ENCODE measurements at regions of chr6 and their contacts with region 1.

Region 1: GRCh38 chr6:26025894-26026832 is 61.1 kb upstream of the HFE start:
- DNase-seq: peak; percentile 97
- H3K4me3 ChIP-seq: peak overlapping the region; percentile 60 to 78 (median 69)
- H3K27ac ChIP-seq: peak overlapping the region; percentile 90 to 97 (median 94)
- H3K4me1 ChIP-seq: peaks cover 13 to 42% (median 31%) of the 10 kb centered on the region in 4 donors
- H3K27me3 ChIP-seq: no peaks in the 10 kb centered on the region
- CTCF ChIP-seq: peak; percentile 82 to 83 (median 82)
- EP300 ChIP-seq: peak; percentile 28
- POLR2A ChIP-seq: no peak

Region 2: GRCh38 chr6:26054857-26055669 is 28.9 kb after region 1 on chr6:
- intact Hi-C with region 1: loop called (anchors 2 kb)
- DNase-seq: peak; percentile 95
- H3K4me3 ChIP-seq: peak overlapping the region; percentile 75 to 83 (median 79)
- H3K27ac ChIP-seq: peak overlapping the region; percentile 94 to 99 (median 96)
- H3K4me1 ChIP-seq: peaks cover 0 to 17% (median 17%) of the 10 kb centered on the region in 4 donors
- H3K27me3 ChIP-seq: no peaks in the 10 kb centered on the region
- CTCF ChIP-seq: peak; percentile 23 to 53 (median 42)
- EP300 ChIP-seq: no peak
- POLR2A ChIP-seq: no peak

Region 3: GRCh38 chr6:26075063-26075717 is 49.0 kb after region 1 on chr6:
- intact Hi-C with region 1: no loop called
- DNase-seq: no peak
- H3K4me3 ChIP-seq: no peak overlapping the region
- H3K27ac ChIP-seq: no peak overlapping the region
- H3K4me1 ChIP-seq: no peaks in the 10 kb centered on the region
- H3K27me3 ChIP-seq: no peaks in the 10 kb centered on the region
- CTCF ChIP-seq: no peak
- EP300 ChIP-seq: no peak
- POLR2A ChIP-seq: no peak

Region 4: DNA sequence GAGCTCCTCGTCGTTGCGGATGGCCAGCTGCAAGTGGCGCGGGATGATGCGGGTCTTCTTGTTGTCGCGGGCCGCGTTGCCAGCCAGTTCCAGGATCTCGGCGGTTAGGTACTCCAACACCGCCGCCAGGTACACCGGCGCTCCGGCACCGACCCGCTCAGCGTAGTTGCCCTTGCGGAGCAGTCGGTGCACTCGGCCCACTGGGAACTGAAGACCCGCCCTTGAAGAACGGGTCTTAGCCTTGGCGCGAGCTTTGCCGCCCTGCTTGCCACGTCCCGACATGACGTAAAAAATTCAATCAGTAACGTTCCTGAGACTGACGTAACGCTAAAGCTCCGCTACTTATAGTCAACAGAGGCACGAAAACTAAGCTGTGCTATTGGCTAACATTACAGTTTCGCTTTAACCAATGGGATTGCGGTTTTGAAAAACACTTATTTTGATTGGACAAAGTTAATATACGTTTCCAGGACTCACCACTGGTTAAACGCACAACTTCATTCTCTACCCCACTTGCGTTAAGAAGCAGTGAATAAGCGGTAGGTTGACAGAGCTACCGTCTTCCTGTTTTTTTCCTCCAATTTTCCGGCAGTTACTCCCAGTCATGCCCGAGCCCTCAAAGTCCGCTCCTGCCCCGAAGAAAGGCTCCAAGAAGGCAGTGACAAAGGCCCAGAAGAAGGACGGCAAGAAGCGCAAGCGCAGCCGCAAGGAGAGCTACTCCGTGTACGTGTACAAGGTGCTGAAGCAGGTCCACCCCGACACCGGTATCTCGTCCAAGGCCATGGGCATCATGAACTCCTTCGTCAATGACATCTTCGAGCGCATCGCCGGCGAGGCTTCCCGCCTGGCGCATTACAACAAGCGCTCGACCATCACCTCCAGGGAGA is 1812.1 kb after region 1 on chr6:
- intact Hi-C with region 1: loop called (anchors 10 kb)
- DNase-seq: peak; percentile 93
- H3K4me3 ChIP-seq: peak overlapping the region; percentile 69 to 90 (median 77)
- H3K27ac ChIP-seq: peak overlapping the region; percentile 89 to 96 (median 95)
- H3K4me1 ChIP-seq: peaks cover 18 to 30% (median 27%) of the 10 kb centered on the region in 4 donors
- H3K27me3 ChIP-seq: peaks cover 0 to 3% (median 0%) of the 10 kb centered on the region in 4 donors
- CTCF ChIP-seq: peak in 1 of 3 experiments; percentile 14
- EP300 ChIP-seq: no peak
- POLR2A ChIP-seq: peak; percentile 43